ENCODE measurements at regions of chr17 and their contacts with region 1.

Region 1: GRCh38 chr17:81484195-81484979 is 28.2 kb downstream of the ACTG1 start:
- DNase-seq: peak; percentile 88 to 95 (median 91)
- ATAC-seq: peak; percentile 23 to 75 (median 60)
- H3K4me3 ChIP-seq: peak overlapping the region; percentile 20 to 64 (median 51)
- H3K27ac ChIP-seq: peak overlapping the region in 2 of 12 donors; percentile 49 to 62
- H3K4me1 ChIP-seq: peaks cover 0 to 70% (median 53%) of the 10 kb centered on the region in 12 donors
- H3K27me3 ChIP-seq: peaks cover 0 to 8% (median 0%) of the 10 kb centered on the region in 9 donors
- CTCF ChIP-seq: peak; percentile 93 to 100 (median 98)
- POLR2A ChIP-seq: no peak

Region 2: GRCh38 chr17:81285179-81285878 is 199.1 kb before region 1 on chr17:
- intact Hi-C with region 1: loop called in 8 of 10 experiments (anchors 2 to 10 kb)
- DNase-seq: peak; percentile 86 to 92 (median 89)
- ATAC-seq: peak; percentile 66 to 93 (median 88)
- H3K4me3 ChIP-seq: peak overlapping the region in 11 of 12 donors; percentile 23 to 58 (median 43)
- H3K27ac ChIP-seq: peak overlapping the region; percentile 71 to 94 (median 82)
- H3K4me1 ChIP-seq: peaks cover 4 to 55% (median 28%) of the 10 kb centered on the region in 12 donors
- H3K27me3 ChIP-seq: no peaks in the 10 kb centered on the region
- CTCF ChIP-seq: no peak
- POLR2A ChIP-seq: no peak

Region 3: DNA sequence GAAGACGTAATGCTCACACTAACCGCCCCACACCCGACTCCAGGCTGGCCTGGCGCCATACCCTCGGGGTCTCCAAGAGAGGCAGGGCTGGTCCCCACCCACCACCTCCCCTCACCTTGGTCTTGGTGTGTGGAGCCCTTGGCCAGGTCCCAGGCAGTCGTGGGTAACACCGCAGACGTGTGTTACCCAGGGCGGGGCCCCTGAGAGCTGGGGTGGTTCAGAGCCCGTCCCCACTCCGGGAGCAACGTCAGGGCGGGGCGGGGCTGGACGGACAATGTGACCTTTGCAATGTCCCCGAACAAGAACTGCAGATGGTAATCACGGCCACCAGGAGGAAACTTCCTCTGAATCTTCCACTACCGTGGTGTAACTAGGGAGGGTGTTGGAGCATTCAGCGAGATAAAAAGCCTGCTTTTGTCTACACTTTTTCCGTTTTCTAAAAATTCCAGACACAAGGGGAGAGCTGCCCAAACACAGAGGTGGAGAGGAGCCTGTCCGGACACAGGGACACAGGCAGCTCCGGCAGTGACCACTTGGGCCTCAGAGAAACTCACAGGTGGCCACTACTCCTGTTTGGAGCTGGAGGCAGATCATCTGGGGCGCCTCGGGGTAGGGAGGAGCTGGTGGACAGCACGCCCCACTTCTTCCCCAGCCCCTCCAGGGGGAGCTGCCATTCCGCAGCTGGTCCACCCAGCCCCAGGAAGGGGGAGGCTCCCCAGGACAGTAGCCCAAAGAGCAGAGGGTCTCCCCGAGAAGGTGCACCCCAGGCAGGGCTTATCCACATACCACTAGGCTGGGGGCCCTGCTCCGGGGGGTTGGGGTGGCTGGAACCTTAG is 175.1 kb before region 1 on chr17:
- intact Hi-C with region 1: loop called in 1 of 10 experiments (anchors 2 kb)
- DNase-seq: peak; percentile 90 to 95 (median 94)
- ATAC-seq: peak; percentile 91 to 95 (median 93)
- H3K4me3 ChIP-seq: peak overlapping the region; percentile 5 to 62 (median 50)
- H3K27ac ChIP-seq: peak overlapping the region; percentile 58 to 85 (median 78)
- H3K4me1 ChIP-seq: peaks cover 4 to 33% (median 17%) of the 10 kb centered on the region in 12 donors
- H3K27me3 ChIP-seq: no peaks in the 10 kb centered on the region
- CTCF ChIP-seq: peak in 11 of 12 donors; percentile 36 to 65 (median 48)
- POLR2A ChIP-seq: peak in 1 of 2 donors; percentile 67

Region 4: DNA sequence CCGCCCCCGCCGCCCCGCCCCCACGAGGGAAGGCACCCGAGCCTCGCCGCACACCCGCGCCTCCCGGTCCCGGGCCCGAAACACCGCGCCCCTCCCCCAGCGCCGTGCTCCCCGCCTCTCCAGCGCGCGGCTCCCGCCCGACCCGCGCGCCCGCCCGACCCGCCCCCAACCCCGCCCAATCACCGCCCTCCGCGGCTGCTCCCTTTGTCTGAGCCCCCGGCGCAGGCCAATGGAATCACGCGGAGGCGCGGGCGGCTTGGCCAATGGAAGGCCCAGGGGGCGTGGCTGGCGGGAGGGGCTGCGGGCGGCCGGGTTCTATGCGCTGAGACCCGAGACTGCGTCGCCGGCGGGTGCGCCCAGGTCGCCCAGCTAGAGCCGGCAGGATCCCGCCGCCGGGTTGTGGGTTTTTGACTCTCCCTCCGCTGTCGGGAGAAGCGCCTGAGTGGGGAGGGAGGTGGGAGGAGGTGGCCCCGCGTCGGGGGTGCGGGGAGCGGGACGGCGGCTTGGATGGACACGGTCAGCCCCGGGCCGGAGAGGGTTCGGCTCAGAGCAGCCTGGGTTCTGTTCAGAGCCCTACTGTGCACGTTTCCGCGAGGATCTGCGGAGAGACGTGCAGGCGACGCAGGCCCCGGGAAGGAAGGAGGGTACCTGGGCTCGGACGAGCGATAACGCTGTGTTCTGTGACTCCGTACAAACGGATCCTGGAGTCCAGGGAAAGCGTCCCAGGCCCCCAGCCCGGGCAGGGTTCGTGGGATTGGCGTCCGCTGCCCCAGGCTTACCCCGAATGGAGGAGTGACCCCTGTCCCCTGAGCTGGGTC is 138.1 kb before region 1 on chr17:
- intact Hi-C with region 1: no loop called
- DNase-seq: peak; percentile 98 to 100 (median 99)
- ATAC-seq: peak; percentile 87 to 94 (median 92)
- H3K4me3 ChIP-seq: peak overlapping the region; percentile 39 to 93 (median 77)
- H3K27ac ChIP-seq: peak overlapping the region; percentile 82 to 99 (median 96)
- H3K4me1 ChIP-seq: peaks cover 0 to 60% (median 17%) of the 10 kb centered on the region in 12 donors
- H3K27me3 ChIP-seq: peaks cover 0 to 28% (median 0%) of the 10 kb centered on the region in 9 donors
- CTCF ChIP-seq: no peak
- POLR2A ChIP-seq: peak in 1 of 2 donors; percentile 91

Region 5: DNA sequence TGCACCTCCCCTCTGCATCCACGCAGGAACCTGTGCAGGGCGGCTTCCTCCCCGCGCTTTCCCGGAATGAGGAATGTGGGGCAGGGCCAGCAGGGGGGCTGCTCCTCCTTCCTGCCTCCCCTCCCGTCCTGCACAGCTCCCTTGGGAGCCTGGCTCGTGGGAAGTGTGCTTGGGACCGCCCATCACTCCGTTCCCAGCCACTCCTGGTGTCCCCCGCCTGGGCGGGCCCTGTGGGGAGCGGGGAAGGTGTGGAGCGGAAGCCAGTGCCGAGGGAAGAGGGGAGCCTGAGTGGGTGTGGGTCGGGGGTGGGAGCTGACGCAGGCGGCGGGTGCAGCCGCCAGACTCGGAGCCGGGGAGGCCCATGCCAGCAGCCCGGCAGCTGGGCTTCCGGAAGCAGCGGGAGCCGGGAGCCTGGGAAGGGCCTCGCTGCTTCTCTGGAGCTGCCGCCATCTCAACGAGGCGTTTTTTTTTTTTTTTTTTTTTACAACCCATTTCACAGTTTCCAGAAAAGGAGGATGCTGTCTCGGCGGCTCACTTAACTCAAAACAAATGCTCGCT is 65.0 kb before region 1 on chr17:
- intact Hi-C with region 1: loop called in 2 of 10 experiments (anchors 5 kb)
- DNase-seq: peak; percentile 94 to 97 (median 95)
- ATAC-seq: peak; percentile 71 to 87 (median 79)
- H3K4me3 ChIP-seq: peak overlapping the region in 10 of 12 donors; percentile 13 to 45 (median 38)
- H3K27ac ChIP-seq: peak overlapping the region; percentile 70 to 97 (median 92)
- H3K4me1 ChIP-seq: peaks cover 31 to 78% (median 69%) of the 10 kb centered on the region in 12 donors
- H3K27me3 ChIP-seq: no peaks in the 10 kb centered on the region
- CTCF ChIP-seq: no peak
- POLR2A ChIP-seq: peak in 1 of 2 donors; percentile 50

Region 6: DNA sequence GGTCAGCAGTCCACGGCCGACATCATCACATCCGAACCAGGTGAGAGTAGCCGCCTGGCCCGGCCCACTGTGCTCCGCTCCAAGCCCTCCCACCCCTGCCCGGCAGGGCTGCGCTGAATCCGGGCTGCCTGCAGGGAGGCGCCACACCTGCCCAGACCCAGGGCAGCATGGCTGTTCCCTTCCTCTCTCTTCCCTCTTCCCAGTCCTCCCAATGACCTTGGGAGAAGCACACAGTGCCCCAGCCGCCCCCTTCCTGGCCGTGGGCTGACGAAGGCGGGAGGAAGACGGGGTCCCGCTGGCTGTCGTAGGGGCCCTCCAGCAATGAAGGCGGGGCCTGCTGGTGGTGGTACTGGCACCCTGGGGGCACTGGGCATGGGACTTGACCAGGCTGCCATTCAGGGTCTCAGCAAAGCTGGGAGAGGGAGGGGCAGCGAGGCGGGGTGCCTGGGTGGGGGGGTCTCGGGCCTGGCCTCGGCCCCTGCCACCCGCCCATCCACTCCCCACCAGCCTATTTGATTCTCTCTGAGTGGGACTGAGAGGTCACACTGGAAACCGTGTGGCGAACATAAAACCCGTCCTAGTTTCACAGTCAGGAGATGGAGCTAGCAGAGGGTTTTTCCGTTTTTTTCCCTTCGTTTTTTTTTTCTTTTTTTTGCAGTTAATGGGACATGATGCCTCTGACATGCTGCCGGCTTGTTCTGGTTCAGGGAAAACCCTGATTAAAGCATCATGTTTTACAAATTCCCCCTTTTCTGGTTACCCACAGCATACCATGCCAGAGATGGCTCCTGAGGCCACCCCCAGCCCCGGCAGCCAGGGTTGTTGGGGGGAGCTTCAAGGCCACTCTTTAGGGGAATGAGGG is 38.5 kb before region 1 on chr17:
- intact Hi-C with region 1: loop called in 1 of 10 experiments (anchors 2 kb)
- DNase-seq: no peak
- ATAC-seq: no peak
- H3K4me3 ChIP-seq: no peak overlapping the region
- H3K27ac ChIP-seq: no peak overlapping the region
- H3K4me1 ChIP-seq: no peaks in the 10 kb centered on the region
- H3K27me3 ChIP-seq: no peaks in the 10 kb centered on the region
- CTCF ChIP-seq: no peak
- POLR2A ChIP-seq: no peak

Measured in heart left ventricle (tissue), 16 donors.